Activated naive CD4-positive, alpha-beta T cell treated with anti-CD3 and anti-CD28 coated beads for 36 hours (primary cell): ENCODE measurements at regions of chr6 and their contacts with region 1.

Region 1: DNA sequence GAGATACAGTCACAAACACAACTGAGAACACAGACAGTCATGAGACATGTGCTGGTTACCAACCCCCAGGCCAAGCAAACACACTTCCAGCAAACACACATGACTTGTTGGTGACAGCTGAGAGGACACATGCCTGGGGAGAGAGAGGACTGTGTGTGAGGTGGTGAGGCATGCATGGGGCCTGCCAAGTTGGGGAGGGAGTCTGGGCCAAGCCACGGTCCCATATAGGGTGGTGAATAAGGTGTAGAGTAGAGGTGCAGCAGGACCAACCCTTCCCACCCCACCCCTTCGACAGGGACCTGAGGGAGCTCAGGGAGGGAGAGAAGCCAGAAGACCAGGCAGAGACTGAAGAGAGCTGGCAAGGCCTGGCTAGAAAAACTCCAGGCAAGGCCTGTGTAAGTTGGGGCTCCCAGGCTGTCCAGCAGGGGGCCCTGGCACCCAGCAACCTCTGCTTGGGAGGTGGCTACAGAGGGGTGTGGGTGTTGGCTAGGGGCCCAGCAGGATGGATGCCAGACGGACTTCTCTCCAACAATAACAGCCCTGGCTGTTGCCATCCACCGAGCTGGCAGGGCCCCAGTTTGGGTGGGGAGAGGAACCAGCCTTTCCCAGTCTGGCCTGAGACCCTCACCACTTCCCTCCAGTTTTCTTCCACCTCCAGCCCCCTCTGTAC is 2.0 kb upstream of the SLC29A1 start:
- DNase-seq: peak; percentile 86
- H3K4me3 Mint-ChIP-seq: no peak overlapping the region
- H3K27ac Mint-ChIP-seq: peak overlapping the region; percentile 21
- H3K4me1 Mint-ChIP-seq: peaks cover 49% of the 10 kb centered on the region
- H3K27me3 Mint-ChIP-seq: peaks cover 2% of the 10 kb centered on the region

Region 2: GRCh38 chr6:44127186-44128019 is 94.0 kb before region 1 on chr6 and contains the starts of genes MRPL14 and TMEM63B:
- CTCF ChIA-PET with region 1: interaction called, 4 read pairs
- intact Hi-C with region 1: loop called (anchors 1 kb)
- DNase-seq: peak; percentile 86
- H3K4me3 Mint-ChIP-seq: peak within 1 kb of the TSS; percentile 88
- H3K27ac Mint-ChIP-seq: peak within 1 kb of the TSS; percentile 93
- H3K4me1 Mint-ChIP-seq: peaks cover 41% of the 10 kb centered on the region
- H3K27me3 Mint-ChIP-seq: no peaks in the 10 kb centered on the region
- total RNA-seq, gene MRPL14: 40.9 to 41.0 TPM
- total RNA-seq, gene TMEM63B: 7.8 to 8.3 TPM

Region 3: GRCh38 chr6:44237813-44238433 is 16.5 kb after region 1 on chr6:
- CTCF ChIA-PET with region 1: interaction called, 77 read pairs
- intact Hi-C with region 1: loop called (anchors 1 kb)
- DNase-seq: peak; percentile 77
- H3K4me3 Mint-ChIP-seq: peak overlapping the region; percentile 78
- H3K27ac Mint-ChIP-seq: peak overlapping the region; percentile 87
- H3K4me1 Mint-ChIP-seq: peaks cover 14% of the 10 kb centered on the region
- H3K27me3 Mint-ChIP-seq: no peaks in the 10 kb centered on the region

Region 4: GRCh38 chr6:44257025-44257752 is 35.8 kb after region 1 on chr6 and contains the start of gene SLC35B2:
- CTCF ChIA-PET with region 1: interaction called, 8 read pairs
- intact Hi-C with region 1: loop called (anchors 2 kb)
- DNase-seq: peak; percentile 61
- H3K4me3 Mint-ChIP-seq: peak within 1 kb of the TSS; percentile 77
- H3K27ac Mint-ChIP-seq: peak within 1 kb of the TSS; percentile 86
- H3K4me1 Mint-ChIP-seq: peaks cover 54% of the 10 kb centered on the region
- H3K27me3 Mint-ChIP-seq: no peaks in the 10 kb centered on the region
- total RNA-seq, gene SLC35B2: 7.2 to 7.3 TPM

Region 5: DNA sequence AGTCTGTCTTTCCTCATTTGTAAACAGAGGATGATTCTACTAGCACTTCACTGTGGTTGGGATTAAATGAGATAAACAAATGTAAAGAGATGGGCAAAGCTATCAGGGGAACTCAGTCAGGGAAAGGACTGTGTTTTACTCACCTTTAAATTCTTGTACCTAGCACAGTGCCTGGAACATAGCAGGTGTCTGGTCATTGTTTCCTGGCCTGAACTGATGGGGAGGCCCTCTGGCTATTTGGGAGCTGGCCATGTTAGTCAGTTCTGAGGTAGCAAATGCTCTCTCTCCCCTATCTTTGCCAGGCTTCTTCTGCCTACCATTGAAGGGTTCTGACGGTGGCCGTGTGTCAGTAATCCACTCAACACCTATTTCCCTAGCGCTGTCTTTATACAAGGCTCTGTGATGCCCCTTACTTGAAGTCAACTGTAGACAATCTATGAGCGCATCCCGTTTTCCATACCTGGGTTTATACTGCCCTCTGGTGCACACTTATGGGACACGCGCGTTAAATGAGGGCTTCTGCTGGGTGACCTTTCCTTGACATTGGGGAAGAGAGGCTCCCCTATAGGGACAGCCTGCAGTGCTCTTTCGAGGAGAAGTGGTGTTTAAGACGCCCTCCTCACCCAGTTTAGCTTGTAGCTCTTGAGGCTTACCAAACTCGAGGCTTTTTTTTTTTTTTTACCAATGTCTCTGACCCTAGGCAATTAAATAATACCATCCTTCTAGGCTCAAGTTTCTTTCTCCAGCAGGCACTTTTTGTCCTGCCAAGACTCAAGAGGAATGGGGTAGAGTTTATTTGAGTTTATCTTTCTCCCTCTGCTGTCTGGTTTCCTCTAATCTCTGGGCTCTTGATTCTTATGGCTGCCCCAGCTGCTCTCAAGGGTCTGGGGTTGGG is 117.0 kb after region 1 on chr6:
- CTCF ChIA-PET with region 1: interaction called, 5 read pairs
- intact Hi-C with region 1: loop called (anchors 1 kb)
- DNase-seq: peak; percentile 81
- H3K4me3 Mint-ChIP-seq: no peak overlapping the region
- H3K27ac Mint-ChIP-seq: no peak overlapping the region
- H3K4me1 Mint-ChIP-seq: no peaks in the 10 kb centered on the region
- H3K27me3 Mint-ChIP-seq: peaks cover 24% of the 10 kb centered on the region